ENCODE measurements at regions of chr10 and their contacts with region 1.

Region 1: DNA sequence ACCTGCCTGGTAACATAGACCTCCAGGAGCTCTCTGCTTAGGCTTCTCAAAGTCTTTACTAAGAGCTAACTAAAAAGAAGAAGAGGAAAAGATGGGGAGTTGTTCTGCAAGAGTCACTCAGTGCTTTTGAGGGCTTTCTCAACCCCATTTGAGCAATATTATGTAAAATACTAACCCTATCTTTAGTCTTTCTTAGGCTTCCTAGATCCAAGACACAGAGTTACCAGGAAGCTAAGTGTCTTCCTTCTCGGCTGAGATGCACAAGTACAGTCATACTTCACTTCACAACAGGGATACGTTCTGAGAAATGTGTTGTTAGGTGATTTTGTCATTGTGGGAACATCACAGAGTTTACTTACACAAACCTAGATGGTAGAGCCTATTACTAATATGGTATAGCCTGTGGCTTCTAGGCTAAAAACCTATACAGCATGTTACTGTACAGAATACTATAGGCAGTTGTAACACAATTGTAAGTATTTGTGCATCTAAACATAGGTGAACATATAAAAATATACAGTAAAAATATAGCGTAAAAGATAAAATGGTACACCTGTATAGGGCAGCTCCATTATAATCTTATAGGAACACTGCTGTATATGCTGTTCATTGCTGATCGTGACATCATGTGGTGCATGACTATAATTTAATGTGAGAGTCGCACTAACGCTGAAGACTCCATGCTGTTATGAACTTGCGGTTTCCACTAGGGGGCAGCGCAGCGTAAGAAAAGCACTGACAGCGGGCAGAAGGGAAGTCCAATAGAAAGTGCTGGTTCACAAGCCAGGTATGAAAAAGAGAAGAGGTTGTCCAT is 16.3 kb downstream of the ANKRD22 start:
- DNase-seq: peak; percentile 90
- ATAC-seq: peak; percentile 97
- H3K4me3 ChIP-seq: no peak overlapping the region
- H3K4me3 Mint-ChIP-seq: no peak overlapping the region
- H3K27ac ChIP-seq: no peak overlapping the region
- H3K27ac Mint-ChIP-seq: no peak overlapping the region
- H3K4me1 ChIP-seq: peaks cover 0 to 5% of the 10 kb centered on the region in 2 donors
- H3K4me1 Mint-ChIP-seq: peaks cover 6% of the 10 kb centered on the region
- H3K27me3 ChIP-seq: no peaks in the 10 kb centered on the region
- H3K27me3 Mint-ChIP-seq: peaks cover 3% of the 10 kb centered on the region
- CTCF ChIP-seq: peak; percentile 93

Region 2: GRCh38 chr10:88769384-88769783 is 65.9 kb before region 1 on chr10:
- CTCF ChIA-PET with region 1: no interaction called
- POLR2A ChIA-PET with region 1: no interaction called
- intact Hi-C with region 1: no loop called
- DNase-seq: no peak
- ATAC-seq: no peak
- H3K4me3 ChIP-seq: no peak overlapping the region
- H3K4me3 Mint-ChIP-seq: no peak overlapping the region
- H3K27ac ChIP-seq: no peak overlapping the region
- H3K27ac Mint-ChIP-seq: no peak overlapping the region
- H3K4me1 ChIP-seq: no peaks in the 10 kb centered on the region
- H3K4me1 Mint-ChIP-seq: no peaks in the 10 kb centered on the region
- H3K27me3 ChIP-seq: no peaks in the 10 kb centered on the region
- H3K27me3 Mint-ChIP-seq: no peaks in the 10 kb centered on the region
- CTCF ChIP-seq: no peak

Region 3: DNA sequence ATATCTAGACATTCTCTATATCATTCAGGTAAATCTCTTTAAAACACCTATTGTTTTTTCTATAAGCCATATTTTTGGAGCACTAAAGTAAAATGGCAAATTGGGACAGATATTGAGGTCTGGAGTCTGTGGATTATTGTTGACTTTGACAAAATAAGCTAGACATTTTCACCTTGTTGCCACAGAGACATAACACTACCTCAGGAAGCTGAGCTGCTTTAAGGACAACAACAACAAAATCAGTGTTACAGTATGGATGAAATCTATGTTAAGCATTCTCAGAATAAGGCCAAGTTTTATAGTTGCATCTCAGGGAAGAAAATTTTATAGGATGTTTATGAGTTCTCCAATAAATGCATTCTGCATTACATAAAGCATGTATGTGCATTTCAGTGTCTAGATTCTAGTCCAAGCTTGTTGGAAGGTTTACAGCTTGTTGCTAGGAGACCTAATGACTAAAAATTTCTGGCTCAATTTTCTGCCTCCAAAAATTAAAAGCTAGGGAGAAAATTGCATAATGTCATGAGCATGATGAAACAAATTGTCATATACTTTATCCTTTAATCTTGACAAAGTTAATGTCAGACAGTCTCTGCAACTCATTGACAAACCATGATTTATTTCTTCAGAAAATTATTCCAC is 14.4 kb before region 1 on chr10:
- CTCF ChIA-PET with region 1: interaction called, 28 read pairs
- POLR2A ChIA-PET with region 1: no interaction called
- intact Hi-C with region 1: no loop called
- DNase-seq: no peak
- ATAC-seq: no peak
- H3K4me3 ChIP-seq: no peak overlapping the region
- H3K4me3 Mint-ChIP-seq: no peak overlapping the region
- H3K27ac ChIP-seq: no peak overlapping the region
- H3K27ac Mint-ChIP-seq: no peak overlapping the region
- H3K4me1 ChIP-seq: peaks cover 5 to 8% of the 10 kb centered on the region in 2 donors
- H3K4me1 Mint-ChIP-seq: peaks cover 6% of the 10 kb centered on the region
- H3K27me3 ChIP-seq: no peaks in the 10 kb centered on the region
- H3K27me3 Mint-ChIP-seq: no peaks in the 10 kb centered on the region
- CTCF ChIP-seq: no peak

Region 4: DNA sequence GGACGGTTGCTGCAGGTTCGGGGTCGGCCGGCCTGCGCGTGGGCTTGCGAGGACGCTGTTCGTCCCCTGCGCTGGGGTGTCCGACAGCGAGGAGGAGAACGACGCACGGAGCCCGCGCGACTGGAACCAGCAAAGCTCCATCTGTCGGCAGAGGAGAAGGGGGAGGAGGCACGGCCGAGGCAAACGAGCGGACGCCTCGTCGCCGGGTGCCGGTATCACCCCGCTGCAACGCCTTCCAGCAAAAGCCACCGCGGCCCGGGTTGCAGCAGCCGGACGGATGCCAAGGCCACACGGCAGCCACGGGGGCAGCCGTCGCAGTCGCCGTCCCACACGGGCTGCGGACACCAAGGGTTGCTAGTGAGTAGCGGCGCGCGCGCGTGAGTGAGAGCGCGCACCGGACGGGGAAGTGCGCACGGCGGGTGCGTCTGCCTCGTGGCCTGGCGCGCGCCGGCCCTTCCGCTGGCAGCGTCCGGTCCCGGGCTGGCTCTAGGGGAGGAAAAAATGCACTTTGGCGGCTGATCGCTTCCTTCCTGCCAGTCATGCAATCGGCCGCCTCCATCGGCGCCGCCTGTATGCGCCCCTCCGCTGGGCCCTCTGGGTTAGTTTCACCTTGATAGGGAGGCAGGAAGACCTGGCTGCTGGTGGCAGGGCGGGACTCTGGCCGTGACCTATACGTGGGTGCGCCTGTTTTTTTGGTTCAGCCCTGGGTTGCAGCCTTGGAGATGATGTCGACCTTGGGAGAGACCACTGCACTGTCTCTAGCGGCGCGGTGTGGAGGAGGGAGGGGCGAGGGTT is 45.2 kb after region 1 on chr10:
- CTCF ChIA-PET with region 1: interaction called, 41 read pairs
- POLR2A ChIA-PET with region 1: interaction called, 4 read pairs
- intact Hi-C with region 1: loop called (anchors 1 kb)
- DNase-seq: peak; percentile 92
- ATAC-seq: peak; percentile 68
- H3K4me3 ChIP-seq: peak overlapping the region; percentile 50 to 84 (median 71)
- H3K4me3 Mint-ChIP-seq: peak overlapping the region; percentile 96
- H3K27ac ChIP-seq: peak overlapping the region; percentile 88 to 91
- H3K27ac Mint-ChIP-seq: peak overlapping the region; percentile 97
- H3K4me1 ChIP-seq: peaks cover 25 to 40% of the 10 kb centered on the region in 2 donors
- H3K4me1 Mint-ChIP-seq: peaks cover 57% of the 10 kb centered on the region
- H3K27me3 ChIP-seq: no peaks in the 10 kb centered on the region
- H3K27me3 Mint-ChIP-seq: no peaks in the 10 kb centered on the region
- CTCF ChIP-seq: peak; percentile 30

Region 5: DNA sequence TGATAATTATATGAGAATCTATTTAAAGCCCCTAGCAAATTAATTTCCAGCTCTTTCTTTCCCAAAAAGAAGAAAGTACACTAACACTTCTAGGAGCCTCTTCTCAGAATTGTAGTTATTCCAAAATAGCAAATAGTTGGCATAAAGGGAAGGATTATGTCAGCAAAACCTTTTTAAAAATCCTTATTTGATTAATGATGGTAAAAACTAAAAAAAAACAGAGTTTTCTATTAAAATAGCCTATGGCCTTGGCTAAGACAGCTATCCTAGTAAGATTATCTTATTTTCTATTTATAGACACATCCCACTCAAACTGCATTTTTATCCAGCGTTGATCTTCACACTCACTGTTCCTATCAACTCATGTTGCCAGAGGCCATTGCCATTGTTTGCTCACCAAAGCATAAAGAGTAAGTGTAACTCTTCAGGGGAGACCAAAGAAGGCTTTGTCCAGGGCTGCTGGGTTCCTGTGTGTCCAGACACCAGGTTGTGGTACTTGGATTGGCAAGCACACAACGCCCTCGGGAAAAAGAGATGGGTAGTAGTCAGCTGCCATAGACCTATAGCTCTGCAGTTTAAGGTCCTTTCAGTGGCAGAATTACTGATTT is 85.8 kb after region 1 on chr10:
- CTCF ChIA-PET with region 1: interaction called, 22 read pairs
- POLR2A ChIA-PET with region 1: interaction called, 3 read pairs
- intact Hi-C with region 1: no loop called
- DNase-seq: no peak
- ATAC-seq: no peak
- H3K4me3 ChIP-seq: no peak overlapping the region
- H3K4me3 Mint-ChIP-seq: no peak overlapping the region
- H3K27ac ChIP-seq: no peak overlapping the region
- H3K27ac Mint-ChIP-seq: no peak overlapping the region
- H3K4me1 ChIP-seq: no peaks in the 10 kb centered on the region
- H3K4me1 Mint-ChIP-seq: no peaks in the 10 kb centered on the region
- H3K27me3 ChIP-seq: no peaks in the 10 kb centered on the region
- H3K27me3 Mint-ChIP-seq: no peaks in the 10 kb centered on the region
- CTCF ChIP-seq: no peak

Region 6: DNA sequence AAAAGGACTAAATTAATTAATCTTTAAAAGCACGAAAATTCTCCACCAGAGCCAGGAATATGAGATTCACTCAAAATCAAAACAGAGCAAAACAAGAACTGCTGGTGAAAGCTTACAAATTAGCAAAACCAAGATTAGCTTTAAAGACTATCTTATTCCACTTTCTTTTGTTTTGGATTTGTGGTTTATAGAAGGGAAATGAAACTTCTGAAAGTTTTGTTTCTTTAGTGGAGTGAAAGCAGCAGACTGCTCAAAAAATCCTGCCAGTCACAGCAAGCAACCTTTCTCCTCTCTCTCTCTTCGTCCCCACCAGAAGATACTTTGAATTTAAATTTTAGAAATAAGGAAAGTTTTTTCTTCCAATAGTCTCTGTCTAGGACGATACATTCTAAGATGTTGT is 109.5 kb after region 1 on chr10:
- CTCF ChIA-PET with region 1: interaction called, 16 read pairs
- POLR2A ChIA-PET with region 1: no interaction called
- intact Hi-C with region 1: no loop called
- DNase-seq: peak; percentile 32
- ATAC-seq: peak; percentile 24
- H3K4me3 ChIP-seq: no peak overlapping the region
- H3K4me3 Mint-ChIP-seq: no peak overlapping the region
- H3K27ac ChIP-seq: no peak overlapping the region
- H3K27ac Mint-ChIP-seq: no peak overlapping the region
- H3K4me1 ChIP-seq: peaks cover 10 to 11% of the 10 kb centered on the region in 2 donors
- H3K4me1 Mint-ChIP-seq: peaks cover 18% of the 10 kb centered on the region
- H3K27me3 ChIP-seq: no peaks in the 10 kb centered on the region
- H3K27me3 Mint-ChIP-seq: no peaks in the 10 kb centered on the region
- CTCF ChIP-seq: no peak

Region 7: GRCh38 chr10:89207181-89207800 is 372.0 kb after region 1 on chr10 and contains the start of gene CH25H:
- CTCF ChIA-PET with region 1: interaction called, 11 read pairs
- POLR2A ChIA-PET with region 1: no interaction called
- intact Hi-C with region 1: no loop called
- DNase-seq: peak; percentile 66
- ATAC-seq: peak; percentile 42
- H3K4me3 ChIP-seq: peak within 1 kb of the TSS; percentile 25 to 85 (median 62)
- H3K4me3 Mint-ChIP-seq: peak within 1 kb of the TSS; percentile 90
- H3K27ac ChIP-seq: no peak within 1 kb of the TSS
- H3K27ac Mint-ChIP-seq: peak within 1 kb of the TSS; percentile 7
- H3K4me1 ChIP-seq: peaks cover 32 to 34% of the 10 kb centered on the region in 2 donors
- H3K4me1 Mint-ChIP-seq: peaks cover 30% of the 10 kb centered on the region
- H3K27me3 ChIP-seq: peaks cover 0 to 59% (median 43%) of the 10 kb centered on the region in 4 experiments
- H3K27me3 Mint-ChIP-seq: peaks cover 48% of the 10 kb centered on the region
- CTCF ChIP-seq: no peak
- total RNA-seq, gene CH25H: not detected in 2 replicates